Activated CD4-positive, alpha-beta memory T cell treated with anti-CD3 and anti-CD28 coated beads for 36 hours (primary cell): ENCODE measurements at regions of chr1 and their contacts with region 1.

Region 1: DNA sequence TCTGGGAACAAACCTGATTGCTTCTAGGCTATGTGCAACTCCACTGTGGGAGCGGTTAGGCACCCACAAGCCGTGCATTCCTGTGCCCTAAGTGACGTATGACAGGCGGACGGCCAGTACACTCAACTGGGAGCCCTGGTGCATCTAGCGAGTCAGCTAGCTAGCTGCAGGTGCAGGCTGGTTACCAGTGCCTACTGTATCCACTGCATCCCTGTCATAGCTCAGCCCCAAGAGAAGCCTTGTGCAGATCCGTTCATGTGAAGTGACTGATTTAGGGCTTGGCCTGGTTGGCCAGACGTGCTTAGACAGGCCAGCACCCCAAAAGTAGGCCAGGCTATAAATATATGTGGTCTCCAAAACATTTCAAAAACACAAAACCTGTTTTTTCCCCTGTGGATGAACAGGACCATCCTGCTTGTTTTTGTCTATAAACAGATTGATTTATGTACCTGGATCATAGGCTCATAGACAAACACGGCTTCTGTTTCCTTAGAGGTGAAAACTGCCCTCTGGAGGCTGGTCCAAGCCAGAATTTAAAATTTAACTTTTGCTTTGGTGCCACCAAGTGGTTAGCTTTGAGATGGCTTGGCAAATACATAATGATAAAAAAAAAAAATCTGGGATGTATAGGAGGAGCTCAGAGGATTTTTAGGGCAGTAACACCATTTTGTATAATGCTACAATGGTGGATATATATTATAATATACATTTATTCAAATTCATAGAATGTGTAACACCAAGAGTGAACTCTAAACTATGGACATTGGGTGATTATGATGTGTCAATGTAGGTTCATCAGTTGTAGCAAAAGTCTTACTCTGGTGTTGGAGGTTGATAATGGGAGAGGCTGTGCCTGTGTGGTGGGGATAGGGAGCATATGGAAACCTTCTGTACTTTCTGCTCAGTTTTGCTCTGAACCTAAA is 68.5 kb downstream of the GIPC2 start:
- DNase-seq: peak; percentile 69
- H3K4me3 Mint-ChIP-seq: no peak overlapping the region
- H3K27ac Mint-ChIP-seq: no peak overlapping the region
- H3K4me1 Mint-ChIP-seq: no peaks in the 10 kb centered on the region
- H3K27me3 Mint-ChIP-seq: no peaks in the 10 kb centered on the region

Region 2: GRCh38 chr1:77605246-77606026 is 508.9 kb before region 1 on chr1:
- CTCF ChIA-PET with region 1: no interaction called
- POLR2A ChIA-PET with region 1: no interaction called
- intact Hi-C with region 1: no loop called
- DNase-seq: no peak
- H3K4me3 Mint-ChIP-seq: no peak overlapping the region
- H3K27ac Mint-ChIP-seq: no peak overlapping the region
- H3K4me1 Mint-ChIP-seq: peaks cover 17% of the 10 kb centered on the region
- H3K27me3 Mint-ChIP-seq: no peaks in the 10 kb centered on the region

Region 3: GRCh38 chr1:77825131-77825709 is 289.1 kb before region 1 on chr1:
- CTCF ChIA-PET with region 1: interaction called, 11 read pairs
- POLR2A ChIA-PET with region 1: no interaction called
- intact Hi-C with region 1: loop called (anchors 1 kb)
- DNase-seq: peak; percentile 11
- H3K4me3 Mint-ChIP-seq: no peak overlapping the region
- H3K27ac Mint-ChIP-seq: no peak overlapping the region
- H3K4me1 Mint-ChIP-seq: peaks cover 2% of the 10 kb centered on the region
- H3K27me3 Mint-ChIP-seq: no peaks in the 10 kb centered on the region

Region 4: GRCh38 chr1:78045926-78046778 is 68.1 kb before region 1 on chr1 and contains the start of gene GIPC2:
- CTCF ChIA-PET with region 1: interaction called, 9 read pairs
- POLR2A ChIA-PET with region 1: no interaction called
- intact Hi-C with region 1: loop called (anchors 5 kb)
- DNase-seq: peak; percentile 51
- H3K4me3 Mint-ChIP-seq: peak within 1 kb of the TSS; percentile 74
- H3K27ac Mint-ChIP-seq: no peak within 1 kb of the TSS
- H3K4me1 Mint-ChIP-seq: peaks cover 24% of the 10 kb centered on the region
- H3K27me3 Mint-ChIP-seq: peaks cover 51% of the 10 kb centered on the region
- total RNA-seq, gene GIPC2: 0.17 TPM in 1 of 2 experiments, not detected in the other